Thyroid gland (tissue), 4 donors: ENCODE measurements at regions of chr11 and their contacts with region 1.

Region 1: GRCh38 chr11:62831520-62832335 is at the start of gene STX5:
- DNase-seq: peak; percentile 100
- H3K4me3 ChIP-seq: peak within 1 kb of the TSS; percentile 62 to 96 (median 65)
- H3K27ac ChIP-seq: peak within 1 kb of the TSS; percentile 87 to 94 (median 90)
- H3K4me1 ChIP-seq: peaks cover 17 to 19% of the 10 kb centered on the region in 2 donors
- H3K27me3 ChIP-seq: no peaks in the 10 kb centered on the region
- CTCF ChIP-seq: peak in 1 of 6 experiments; percentile 8
- POLR2A ChIP-seq: peak; percentile 55 to 92
- total RNA-seq, gene STX5: 26.3 to 62.8 (median 56.7) TPM

Region 2: GRCh38 chr11:62753736-62754603 is 77.8 kb before region 1 on chr11 and contains the start of gene ZBTB3:
- intact Hi-C with region 1: no loop called
- DNase-seq: peak; percentile 99
- H3K4me3 ChIP-seq: peak within 1 kb of the TSS; percentile 9 to 59 (median 19)
- H3K27ac ChIP-seq: peak within 1 kb of the TSS; percentile 62 to 94 (median 75)
- H3K4me1 ChIP-seq: peaks cover 10 to 21% of the 10 kb centered on the region in 2 donors
- H3K27me3 ChIP-seq: no peaks in the 10 kb centered on the region
- CTCF ChIP-seq: peak in 1 of 6 experiments; percentile 26
- POLR2A ChIP-seq: peak; percentile 33 to 89
- total RNA-seq, gene ZBTB3: 10.1 to 17.1 (median 14.8) TPM

Region 3: GRCh38 chr11:62787005-62787759 is 44.5 kb before region 1 on chr11 and contains the start of gene TMEM179B:
- intact Hi-C with region 1: loop called (anchors 10 kb)
- DNase-seq: peak; percentile 98 to 99
- H3K4me3 ChIP-seq: peak within 1 kb of the TSS; percentile 25 to 97 (median 45)
- H3K27ac ChIP-seq: peak within 1 kb of the TSS; percentile 88 to 96 (median 95)
- H3K4me1 ChIP-seq: peaks cover 24 to 32% of the 10 kb centered on the region in 2 donors
- H3K27me3 ChIP-seq: no peaks in the 10 kb centered on the region
- CTCF ChIP-seq: peak in 4 of 6 experiments; percentile 21 to 48 (median 36)
- POLR2A ChIP-seq: peak; percentile 78 to 99
- total RNA-seq, gene TMEM179B: 78.6 to 126 (median 92.4) TPM